ENCODE measurements at regions of chr3 and their contacts with region 1.

Region 1: DNA sequence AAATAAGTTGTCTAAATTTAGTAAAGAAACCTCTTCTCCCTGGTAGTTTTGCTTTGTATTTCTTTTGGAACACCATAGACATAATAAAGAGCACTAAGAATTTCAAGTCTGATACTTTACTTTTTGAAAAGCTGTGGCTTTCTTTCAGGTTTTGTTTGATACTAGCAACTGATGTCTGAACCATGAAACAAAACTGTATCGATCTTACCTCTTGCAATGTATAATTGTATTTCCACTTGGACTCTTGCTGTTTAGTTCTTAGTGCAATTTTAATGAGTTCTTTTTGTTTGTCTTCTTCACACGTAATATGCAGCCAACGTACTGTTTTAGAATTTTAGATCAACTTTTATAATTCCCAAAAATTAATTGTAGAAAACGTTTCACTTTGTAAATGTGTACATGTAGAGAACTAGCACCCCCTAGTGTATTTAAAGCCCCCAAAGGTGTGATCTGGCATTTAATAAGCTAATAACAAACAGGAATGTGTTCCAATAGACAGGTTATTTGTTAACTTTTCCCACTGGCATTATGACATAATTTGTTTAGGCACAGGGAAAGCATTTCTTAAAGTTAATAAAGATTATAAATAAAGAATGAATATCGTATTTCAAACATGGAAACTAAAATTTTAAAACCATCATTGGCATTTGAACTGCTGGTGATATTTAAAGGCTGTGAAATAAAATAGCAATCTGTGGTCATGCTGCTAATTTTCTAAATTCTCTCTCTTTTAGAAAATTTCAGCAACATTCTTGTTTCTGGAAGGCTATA is 289.1 kb upstream of the DNAJC19 start:
- DNase-seq: no peak
- H3K4me3 Mint-ChIP-seq: no peak overlapping the region
- H3K27ac Mint-ChIP-seq: no peak overlapping the region
- H3K4me1 Mint-ChIP-seq: no peaks in the 10 kb centered on the region
- H3K27me3 Mint-ChIP-seq: peaks cover 26% of the 10 kb centered on the region

Region 2: DNA sequence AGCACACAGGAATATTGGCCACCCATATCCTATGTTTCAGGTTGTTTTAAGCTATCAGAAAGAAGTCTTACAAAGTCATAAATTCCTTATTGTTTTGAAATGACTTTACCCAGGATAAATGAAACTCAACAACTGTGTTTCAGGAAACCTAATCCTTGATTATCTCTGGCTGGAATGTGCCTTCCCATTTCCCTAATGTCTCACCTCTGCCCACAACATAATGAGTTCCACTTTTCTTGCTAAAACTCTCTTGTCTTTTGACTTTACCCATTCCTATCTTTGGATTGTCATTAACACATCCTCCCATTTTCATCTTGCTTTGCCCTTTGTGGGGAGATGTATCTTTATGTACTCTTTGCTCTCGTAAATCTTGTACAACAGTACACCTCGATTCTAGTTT is 89.1 kb before region 1 on chr3:
- CTCF ChIA-PET with region 1: no interaction called
- intact Hi-C with region 1: no loop called
- DNase-seq: no peak
- H3K4me3 Mint-ChIP-seq: no peak overlapping the region
- H3K27ac Mint-ChIP-seq: no peak overlapping the region
- H3K4me1 Mint-ChIP-seq: no peaks in the 10 kb centered on the region
- H3K27me3 Mint-ChIP-seq: peaks cover 6% of the 10 kb centered on the region

Region 3: DNA sequence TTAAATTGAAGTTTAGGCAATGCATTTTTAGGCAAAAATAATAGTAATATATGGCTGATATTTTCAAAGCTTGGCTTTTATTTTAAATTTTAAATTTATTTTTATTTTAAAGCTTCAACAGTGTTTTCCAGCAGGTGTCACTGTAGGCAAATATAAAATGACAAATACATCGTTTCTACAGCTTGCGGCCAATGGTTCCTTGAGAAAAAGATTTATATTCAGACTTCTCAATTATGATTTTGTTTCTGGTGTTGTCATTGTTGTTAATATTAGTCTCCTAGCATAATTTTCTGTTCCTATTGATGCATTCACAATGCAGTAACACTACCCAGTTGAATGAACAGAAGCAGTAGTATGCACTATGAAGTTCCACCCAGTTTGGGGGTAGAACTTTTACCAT is 68.4 kb before region 1 on chr3:
- CTCF ChIA-PET with region 1: interaction called, 3 read pairs
- intact Hi-C with region 1: loop called (anchors 2 kb)
- DNase-seq: no peak
- H3K4me3 Mint-ChIP-seq: no peak overlapping the region
- H3K27ac Mint-ChIP-seq: no peak overlapping the region
- H3K4me1 Mint-ChIP-seq: no peaks in the 10 kb centered on the region
- H3K27me3 Mint-ChIP-seq: peaks cover 4% of the 10 kb centered on the region